MCF 10A (cell line): ENCODE measurements at regions of chr6 and their contacts with region 1.

Region 1: DNA sequence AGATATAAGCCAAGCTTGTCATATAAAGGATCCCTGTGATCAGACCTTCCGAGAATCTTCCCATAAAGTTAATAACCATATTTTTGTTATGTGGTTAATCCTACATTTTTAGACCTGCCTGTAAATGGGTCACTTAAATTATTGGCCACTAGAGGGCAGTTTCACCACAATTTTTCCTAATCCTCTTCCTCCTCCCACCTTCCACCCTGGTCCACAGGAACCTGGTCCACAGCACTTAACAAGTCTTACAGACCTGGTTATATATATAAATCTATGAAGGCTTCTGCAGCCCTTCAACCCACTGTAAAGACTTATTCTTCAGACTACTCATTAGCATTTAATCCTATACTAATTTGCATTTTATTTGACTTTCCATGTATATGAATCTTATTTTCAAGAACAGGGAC is 28.3 kb downstream of the MRS2 start:
- DNase-seq: peak; percentile 69
- H3K4me3 Mint-ChIP-seq: no peak overlapping the region
- H3K27ac Mint-ChIP-seq: no peak overlapping the region
- H3K4me1 Mint-ChIP-seq: peaks cover 6% of the 10 kb centered on the region
- H3K27me3 Mint-ChIP-seq: no peaks in the 10 kb centered on the region
- CTCF ChIP-seq: peak; percentile 27

Region 2: GRCh38 chr6:24376866-24377265 is 54.2 kb before region 1 on chr6:
- CTCF ChIA-PET with region 1: no interaction called
- POLR2A ChIA-PET with region 1: no interaction called
- intact Hi-C with region 1: no loop called
- DNase-seq: no peak
- H3K4me3 Mint-ChIP-seq: no peak overlapping the region
- H3K27ac Mint-ChIP-seq: no peak overlapping the region
- H3K4me1 Mint-ChIP-seq: no peaks in the 10 kb centered on the region
- H3K27me3 Mint-ChIP-seq: no peaks in the 10 kb centered on the region
- CTCF ChIP-seq: no peak

Region 3: DNA sequence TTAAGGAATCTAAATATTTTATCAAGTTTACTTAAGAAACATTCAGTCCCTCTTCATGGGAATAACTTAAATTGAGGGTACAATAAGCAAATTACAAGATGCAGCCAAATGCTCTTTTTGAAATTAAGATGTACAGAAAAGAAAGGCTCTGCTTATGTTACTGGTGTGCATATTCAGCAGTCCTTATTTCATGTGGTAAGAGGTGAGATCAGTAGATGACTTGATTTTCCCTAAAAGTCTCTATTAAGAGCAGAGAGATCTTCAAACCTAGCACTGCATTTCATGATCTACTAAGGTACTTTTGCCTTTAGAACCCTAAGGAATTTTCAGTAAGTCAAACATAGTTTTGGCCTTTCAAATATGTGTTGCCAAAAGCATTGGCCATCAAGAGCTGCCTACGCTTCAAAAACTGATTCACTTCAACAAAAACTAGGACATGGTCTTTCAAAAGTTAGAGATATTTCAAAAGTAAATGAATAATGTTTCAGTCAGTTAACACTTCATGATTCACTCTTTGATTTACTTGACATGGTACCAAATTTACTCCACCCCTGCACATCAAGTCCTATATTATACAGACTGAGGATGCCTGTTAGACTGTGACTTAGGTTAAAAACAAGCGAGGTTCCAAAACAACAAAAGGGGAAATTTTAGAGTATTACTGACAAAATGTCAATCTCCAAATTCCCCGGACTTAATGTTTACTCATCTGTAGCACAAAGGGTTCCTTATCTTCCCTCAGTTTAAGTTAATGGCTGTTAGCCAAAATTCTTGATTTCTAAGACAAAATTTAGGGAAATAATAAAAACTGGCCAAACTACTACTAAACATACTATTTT is 268.7 kb after region 1 on chr6:
- CTCF ChIA-PET with region 1: interaction called, 7 read pairs
- POLR2A ChIA-PET with region 1: interaction called, 3 read pairs
- intact Hi-C with region 1: loop called (anchors 5 kb)
- DNase-seq: no peak
- H3K4me3 Mint-ChIP-seq: no peak overlapping the region
- H3K27ac Mint-ChIP-seq: no peak overlapping the region
- H3K4me1 Mint-ChIP-seq: peaks cover 9% of the 10 kb centered on the region
- H3K27me3 Mint-ChIP-seq: no peaks in the 10 kb centered on the region
- CTCF ChIP-seq: no peak